ENCODE measurements at regions of chr15 and their contacts with region 1.

Region 1: DNA sequence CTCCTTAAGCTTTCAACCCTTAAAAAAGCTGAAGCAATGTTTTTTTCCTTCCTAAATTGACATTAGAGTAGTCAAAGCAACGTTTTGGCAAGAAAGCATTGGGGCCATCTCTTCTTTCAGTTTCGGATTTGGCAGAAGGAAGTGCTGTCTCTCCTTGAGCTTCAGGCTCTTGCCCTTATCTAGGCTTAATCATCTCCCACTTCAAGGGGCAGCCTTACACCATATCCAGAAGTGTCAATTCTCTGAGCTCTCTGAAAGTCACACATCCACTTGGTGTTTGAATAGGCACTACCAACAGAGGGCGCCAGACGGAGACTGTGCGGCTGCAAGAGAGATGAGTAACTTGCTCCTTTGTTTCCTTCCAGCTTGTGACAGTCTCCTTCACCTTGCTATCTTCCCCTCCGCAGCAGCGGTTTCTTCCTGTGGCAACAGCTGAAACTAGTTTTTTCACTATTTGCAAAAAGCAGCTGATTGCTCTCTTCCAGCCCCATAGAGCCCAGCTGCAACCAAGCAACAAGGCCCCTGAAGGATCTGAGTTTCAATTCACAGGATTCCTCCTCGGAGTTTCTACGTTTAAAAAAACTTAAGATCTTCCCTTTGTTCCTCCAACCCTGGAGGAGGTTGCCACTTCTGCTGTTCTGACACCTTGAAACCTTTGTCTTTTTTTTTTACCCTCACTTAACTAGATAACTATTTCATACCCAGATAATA is 147.0 kb upstream of the SLCO3A1 start:
- DNase-seq: peak; percentile 82 to 92 (median 86)
- H3K4me3 ChIP-seq: no peak overlapping the region
- H3K4me3 Mint-ChIP-seq: peak overlapping the region in 7 of 8 donors; percentile 19 to 89 (median 71)
- H3K27ac ChIP-seq: no peak overlapping the region
- H3K27ac Mint-ChIP-seq: peak overlapping the region; percentile 68 to 92 (median 81)
- H3K4me1 ChIP-seq: peaks cover 17% of the 10 kb centered on the region
- H3K4me1 Mint-ChIP-seq: peaks cover 8 to 32% (median 14%) of the 10 kb centered on the region in 4 donors
- H3K27me3 ChIP-seq: no peaks in the 10 kb centered on the region
- H3K27me3 Mint-ChIP-seq: peaks cover 0 to 2% of the 10 kb centered on the region in 2 donors

Region 2: GRCh38 chr15:91679429-91679828 is 27.0 kb before region 1 on chr15:
- CTCF ChIA-PET with region 1: interaction called, 10 read pairs
- POLR2A ChIA-PET with region 1: no interaction called
- intact Hi-C with region 1: no loop called
- DNase-seq: no peak
- H3K4me3 ChIP-seq: no peak overlapping the region
- H3K4me3 Mint-ChIP-seq: no peak overlapping the region
- H3K27ac ChIP-seq: no peak overlapping the region
- H3K27ac Mint-ChIP-seq: no peak overlapping the region
- H3K4me1 ChIP-seq: no peaks in the 10 kb centered on the region
- H3K4me1 Mint-ChIP-seq: no peaks in the 10 kb centered on the region
- H3K27me3 ChIP-seq: no peaks in the 10 kb centered on the region
- H3K27me3 Mint-ChIP-seq: peaks cover 21 to 31% of the 10 kb centered on the region in 2 donors

Region 3: GRCh38 chr15:91723959-91724358 is 17.5 kb after region 1 on chr15:
- CTCF ChIA-PET with region 1: interaction called, 14 read pairs
- POLR2A ChIA-PET with region 1: no interaction called
- intact Hi-C with region 1: no loop called
- DNase-seq: no peak
- H3K4me3 ChIP-seq: no peak overlapping the region
- H3K4me3 Mint-ChIP-seq: no peak overlapping the region
- H3K27ac ChIP-seq: no peak overlapping the region
- H3K27ac Mint-ChIP-seq: no peak overlapping the region
- H3K4me1 ChIP-seq: no peaks in the 10 kb centered on the region
- H3K4me1 Mint-ChIP-seq: no peaks in the 10 kb centered on the region
- H3K27me3 ChIP-seq: no peaks in the 10 kb centered on the region
- H3K27me3 Mint-ChIP-seq: peaks cover 11 to 14% of the 10 kb centered on the region in 2 donors

Region 4: GRCh38 chr15:91776104-91776503 is 69.6 kb after region 1 on chr15:
- CTCF ChIA-PET with region 1: no interaction called
- POLR2A ChIA-PET with region 1: no interaction called
- intact Hi-C with region 1: no loop called
- DNase-seq: no peak
- H3K4me3 ChIP-seq: no peak overlapping the region
- H3K4me3 Mint-ChIP-seq: no peak overlapping the region
- H3K27ac ChIP-seq: no peak overlapping the region
- H3K27ac Mint-ChIP-seq: no peak overlapping the region
- H3K4me1 ChIP-seq: no peaks in the 10 kb centered on the region
- H3K4me1 Mint-ChIP-seq: no peaks in the 10 kb centered on the region
- H3K27me3 ChIP-seq: peaks cover 4% of the 10 kb centered on the region
- H3K27me3 Mint-ChIP-seq: peaks cover 23 to 24% of the 10 kb centered on the region in 2 donors

Region 5: GRCh38 chr15:91942676-91943576 is 236.4 kb after region 1 on chr15:
- CTCF ChIA-PET with region 1: interaction called, 53 read pairs
- POLR2A ChIA-PET with region 1: no interaction called
- intact Hi-C with region 1: loop called (anchors 1 kb)
- DNase-seq: peak; percentile 45 to 78 (median 60)
- H3K4me3 ChIP-seq: no peak overlapping the region
- H3K4me3 Mint-ChIP-seq: peak overlapping the region; percentile 42 to 89 (median 76)
- H3K27ac ChIP-seq: peak overlapping the region; percentile 37
- H3K27ac Mint-ChIP-seq: peak overlapping the region; percentile 41 to 89 (median 86)
- H3K4me1 ChIP-seq: peaks cover 48% of the 10 kb centered on the region
- H3K4me1 Mint-ChIP-seq: peaks cover 56 to 93% (median 72%) of the 10 kb centered on the region in 4 donors
- H3K27me3 ChIP-seq: no peaks in the 10 kb centered on the region
- H3K27me3 Mint-ChIP-seq: no peaks in the 10 kb centered on the region